Activated CD8-positive, alpha-beta T cell treated with anti-CD3 and anti-CD28 coated beads, Interleukin-2, amount 10 ng/mL, durations not matched to agents 7 days and 5 days (primary cell): ENCODE measurements at regions of chr21 and their contacts with region 1.

Region 1: GRCh38 chr21:46622226-46622625 is 13.2 kb upstream of the PRMT2 start:
- DNase-seq: peak; percentile 69
- ATAC-seq: peak; percentile 89
- H3K4me3 Mint-ChIP-seq: peak overlapping the region; percentile 57
- H3K27ac Mint-ChIP-seq: peak overlapping the region; percentile 93
- H3K4me1 Mint-ChIP-seq: peaks cover 53% of the 10 kb centered on the region
- H3K27me3 Mint-ChIP-seq: no peaks in the 10 kb centered on the region

Region 2: DNA sequence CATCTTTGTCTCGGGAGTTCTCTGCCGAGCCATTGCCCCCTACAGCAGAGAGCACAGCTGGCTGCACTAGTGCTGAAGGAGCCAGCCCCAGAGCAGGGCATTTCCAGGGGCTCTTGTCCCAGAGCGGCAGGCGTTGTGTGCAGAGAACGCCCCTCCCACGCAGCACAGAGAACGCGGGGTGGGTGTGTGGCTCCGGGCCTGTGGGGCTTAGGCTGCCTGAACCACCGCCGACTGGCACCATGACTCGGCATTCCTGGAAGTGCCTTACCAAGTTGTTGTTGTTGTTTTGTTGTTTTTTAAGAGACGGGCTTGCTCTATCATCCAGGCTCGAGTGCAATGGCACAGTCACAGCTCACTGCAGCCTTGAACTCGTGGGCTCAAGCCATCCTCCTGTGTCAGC is 179.3 kb before region 1 on chr21:
- CTCF ChIA-PET with region 1: no interaction called
- POLR2A ChIA-PET with region 1: no interaction called
- DNase-seq: no peak
- ATAC-seq: no peak
- H3K4me3 Mint-ChIP-seq: no peak overlapping the region
- H3K27ac Mint-ChIP-seq: peak overlapping the region; percentile 50
- H3K4me1 Mint-ChIP-seq: peaks cover 8% of the 10 kb centered on the region
- H3K27me3 Mint-ChIP-seq: no peaks in the 10 kb centered on the region

Region 3: DNA sequence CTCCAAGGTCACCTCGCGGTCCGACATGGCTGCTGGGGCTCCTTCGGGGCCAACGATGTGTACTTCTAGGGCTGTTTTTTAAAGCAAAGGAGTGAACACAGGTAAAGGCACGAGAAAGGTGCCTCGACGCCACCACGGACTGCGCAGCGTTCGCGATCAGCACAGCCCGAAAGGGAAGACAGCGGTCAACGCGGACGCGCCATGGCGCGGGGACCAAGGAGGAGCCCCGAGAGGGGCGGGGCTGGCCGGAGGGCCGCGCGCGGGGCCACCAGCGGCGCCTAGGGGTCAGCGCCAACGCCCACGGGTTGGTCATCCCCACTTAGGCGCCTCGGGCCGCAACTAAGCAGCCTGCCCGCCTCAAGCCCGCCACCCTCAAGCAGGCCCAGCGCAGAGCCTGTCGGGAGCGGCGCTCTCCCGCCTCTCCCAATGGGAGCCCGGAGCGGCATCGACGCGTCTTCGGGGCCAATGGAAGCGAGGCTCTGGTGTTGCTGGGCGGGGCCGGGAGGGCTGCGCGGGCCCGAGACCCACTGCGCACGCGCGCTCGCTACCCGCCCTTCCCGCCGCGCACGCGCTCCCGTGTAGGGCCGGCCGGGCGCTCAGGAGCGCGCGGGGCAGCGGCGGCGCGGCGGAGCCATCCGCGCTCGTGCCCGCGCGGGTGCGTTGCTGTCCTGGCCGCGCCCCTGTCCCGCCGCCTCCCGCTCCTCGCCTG is 163.8 kb before region 1 on chr21 and contains the start of gene DIP2A:
- CTCF ChIA-PET with region 1: no interaction called
- POLR2A ChIA-PET with region 1: no interaction called
- DNase-seq: peak; percentile 96
- ATAC-seq: peak; percentile 98
- H3K4me3 Mint-ChIP-seq: peak within 1 kb of the TSS; percentile 90
- H3K27ac Mint-ChIP-seq: peak within 1 kb of the TSS; percentile 89
- H3K4me1 Mint-ChIP-seq: peaks cover 44% of the 10 kb centered on the region
- H3K27me3 Mint-ChIP-seq: no peaks in the 10 kb centered on the region
- total RNA-seq, gene DIP2A: 53.7 to 53.9 TPM

Region 4: GRCh38 chr21:46559291-46559983 is 62.8 kb before region 1 on chr21:
- CTCF ChIA-PET with region 1: interaction called, 11 read pairs
- POLR2A ChIA-PET with region 1: interaction called, 3 read pairs
- DNase-seq: peak; percentile 77
- ATAC-seq: peak; percentile 84
- H3K4me3 Mint-ChIP-seq: peak overlapping the region; percentile 72
- H3K27ac Mint-ChIP-seq: peak overlapping the region; percentile 97
- H3K4me1 Mint-ChIP-seq: peaks cover 57% of the 10 kb centered on the region
- H3K27me3 Mint-ChIP-seq: no peaks in the 10 kb centered on the region

Region 5: DNA sequence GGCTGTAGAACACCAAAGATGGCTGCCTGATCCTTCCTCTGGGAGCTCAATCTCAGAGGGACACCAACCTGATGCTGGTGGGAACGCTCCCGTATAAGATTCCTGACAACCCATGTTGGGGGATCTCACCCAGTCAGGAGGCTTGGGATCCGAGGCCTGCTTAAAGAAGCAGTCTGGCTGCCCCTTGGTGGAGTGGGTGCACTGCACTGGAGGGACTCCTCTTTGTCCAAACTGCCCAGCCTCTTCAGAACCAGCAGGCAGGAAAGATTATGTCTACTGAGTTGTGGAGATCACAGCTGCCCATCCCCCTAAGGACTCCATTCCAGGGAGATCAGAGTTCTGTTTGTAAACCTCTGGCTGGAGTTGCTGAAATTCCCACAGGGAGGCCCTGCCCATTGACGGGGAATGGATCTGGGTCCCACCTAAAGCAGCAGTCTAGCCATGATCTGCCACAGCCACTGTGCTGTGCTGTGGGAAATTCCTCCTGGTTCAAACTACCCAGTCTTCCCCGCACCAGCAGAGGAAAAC is 40.4 kb before region 1 on chr21:
- CTCF ChIA-PET with region 1: no interaction called
- POLR2A ChIA-PET with region 1: no interaction called
- DNase-seq: peak; percentile 15
- ATAC-seq: no peak
- H3K4me3 Mint-ChIP-seq: no peak overlapping the region
- H3K27ac Mint-ChIP-seq: no peak overlapping the region
- H3K4me1 Mint-ChIP-seq: no peaks in the 10 kb centered on the region
- H3K27me3 Mint-ChIP-seq: no peaks in the 10 kb centered on the region